Naive thymus-derived CD4-positive, alpha-beta T cell (primary cell): ENCODE measurements at regions of chr12 and their contacts with region 1.

Region 1: GRCh38 chr12:62313727-62314380 is 53.6 kb downstream of the USP15 start:
- DNase-seq: no peak
- ATAC-seq: no peak
- H3K4me3 ChIP-seq: no peak overlapping the region
- H3K4me3 Mint-ChIP-seq: no peak overlapping the region
- H3K27ac ChIP-seq: no peak overlapping the region
- H3K27ac Mint-ChIP-seq: no peak overlapping the region
- H3K4me1 ChIP-seq: peaks cover 0 to 9% of the 10 kb centered on the region in 2 donors
- H3K4me1 Mint-ChIP-seq: peaks cover 25 to 77% (median 60%) of the 10 kb centered on the region in 7 donors
- H3K27me3 ChIP-seq: no peaks in the 10 kb centered on the region
- H3K27me3 Mint-ChIP-seq: no peaks in the 10 kb centered on the region

Region 2: GRCh38 chr12:62050785-62051184 is 263.1 kb before region 1 on chr12:
- CTCF ChIA-PET with region 1: no interaction called
- POLR2A ChIA-PET with region 1: no interaction called
- intact Hi-C with region 1: no loop called
- DNase-seq: no peak
- ATAC-seq: no peak
- H3K4me3 ChIP-seq: no peak overlapping the region
- H3K4me3 Mint-ChIP-seq: no peak overlapping the region
- H3K27ac ChIP-seq: no peak overlapping the region
- H3K27ac Mint-ChIP-seq: no peak overlapping the region
- H3K4me1 ChIP-seq: no peaks in the 10 kb centered on the region
- H3K4me1 Mint-ChIP-seq: no peaks in the 10 kb centered on the region
- H3K27me3 ChIP-seq: no peaks in the 10 kb centered on the region
- H3K27me3 Mint-ChIP-seq: no peaks in the 10 kb centered on the region

Region 3: GRCh38 chr12:62128175-62128975 is 185.5 kb before region 1 on chr12:
- CTCF ChIA-PET with region 1: no interaction called
- POLR2A ChIA-PET with region 1: no interaction called
- intact Hi-C with region 1: no loop called
- DNase-seq: no peak
- ATAC-seq: peak; percentile 38
- H3K4me3 ChIP-seq: no peak overlapping the region
- H3K4me3 Mint-ChIP-seq: no peak overlapping the region
- H3K27ac ChIP-seq: no peak overlapping the region
- H3K27ac Mint-ChIP-seq: no peak overlapping the region
- H3K4me1 ChIP-seq: no peaks in the 10 kb centered on the region
- H3K4me1 Mint-ChIP-seq: peaks cover 0 to 6% (median 0%) of the 10 kb centered on the region in 7 donors
- H3K27me3 ChIP-seq: no peaks in the 10 kb centered on the region
- H3K27me3 Mint-ChIP-seq: peaks cover 0 to 13% (median 4%) of the 10 kb centered on the region in 5 donors

Region 4: DNA sequence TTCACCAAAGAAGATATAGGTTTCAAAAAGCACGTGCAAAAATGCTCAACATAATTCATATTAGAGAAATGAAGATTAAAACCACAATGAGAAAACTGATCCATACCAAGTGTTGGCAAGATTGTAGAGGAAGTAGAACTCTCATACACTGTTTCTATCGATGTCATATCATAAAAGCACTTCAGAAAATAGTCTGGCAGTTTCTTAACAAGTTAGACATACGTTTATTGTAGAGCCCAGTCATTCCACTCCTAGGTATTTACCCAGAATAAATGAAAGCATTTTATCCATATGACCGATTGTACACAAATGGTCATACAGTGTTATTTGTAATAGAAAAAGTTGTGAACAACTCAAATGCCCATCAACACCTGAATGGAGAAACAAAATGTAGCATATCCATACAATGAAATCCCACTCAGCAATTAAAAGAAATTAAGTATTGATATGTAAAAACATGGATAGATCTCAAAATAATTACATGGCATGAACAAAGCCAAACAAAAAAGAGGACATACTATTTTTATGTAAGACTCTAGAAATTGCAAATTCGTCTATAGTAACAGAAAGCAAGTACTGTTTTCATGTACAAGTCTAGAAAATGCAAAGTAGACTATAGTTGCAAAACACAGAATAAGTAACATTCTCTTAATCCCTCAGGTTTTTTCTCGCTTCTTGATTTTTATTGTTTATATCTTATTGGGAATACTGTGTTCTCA is 12.6 kb before region 1 on chr12:
- CTCF ChIA-PET with region 1: no interaction called
- POLR2A ChIA-PET with region 1: no interaction called
- intact Hi-C with region 1: loop called in 1 of 2 experiments (anchors 2 kb)
- DNase-seq: no peak
- ATAC-seq: no peak
- H3K4me3 ChIP-seq: no peak overlapping the region
- H3K4me3 Mint-ChIP-seq: peak overlapping the region in 5 of 10 donors; percentile 3 to 56 (median 12)
- H3K27ac ChIP-seq: no peak overlapping the region
- H3K27ac Mint-ChIP-seq: peak overlapping the region in 5 of 9 donors; percentile 12 to 51 (median 24)
- H3K4me1 ChIP-seq: peaks cover 9% of the 10 kb centered on the region in 2 donors
- H3K4me1 Mint-ChIP-seq: peaks cover 36 to 77% (median 69%) of the 10 kb centered on the region in 7 donors
- H3K27me3 ChIP-seq: no peaks in the 10 kb centered on the region
- H3K27me3 Mint-ChIP-seq: no peaks in the 10 kb centered on the region

Region 5: GRCh38 chr12:62332598-62332997 is 18.7 kb after region 1 on chr12:
- CTCF ChIA-PET with region 1: interaction called, 3 read pairs
- POLR2A ChIA-PET with region 1: no interaction called
- intact Hi-C with region 1: loop called in 1 of 2 experiments (anchors 2 kb)
- DNase-seq: no peak
- ATAC-seq: no peak
- H3K4me3 ChIP-seq: no peak overlapping the region
- H3K4me3 Mint-ChIP-seq: no peak overlapping the region
- H3K27ac ChIP-seq: no peak overlapping the region
- H3K27ac Mint-ChIP-seq: peak overlapping the region in 4 of 9 donors; percentile 9 to 66 (median 36)
- H3K4me1 ChIP-seq: no peaks in the 10 kb centered on the region
- H3K4me1 Mint-ChIP-seq: peaks cover 18 to 68% (median 44%) of the 10 kb centered on the region in 7 donors
- H3K27me3 ChIP-seq: no peaks in the 10 kb centered on the region
- H3K27me3 Mint-ChIP-seq: no peaks in the 10 kb centered on the region